ENCODE measurements at regions of chr11 and their contacts with region 1.

Region 1: DNA sequence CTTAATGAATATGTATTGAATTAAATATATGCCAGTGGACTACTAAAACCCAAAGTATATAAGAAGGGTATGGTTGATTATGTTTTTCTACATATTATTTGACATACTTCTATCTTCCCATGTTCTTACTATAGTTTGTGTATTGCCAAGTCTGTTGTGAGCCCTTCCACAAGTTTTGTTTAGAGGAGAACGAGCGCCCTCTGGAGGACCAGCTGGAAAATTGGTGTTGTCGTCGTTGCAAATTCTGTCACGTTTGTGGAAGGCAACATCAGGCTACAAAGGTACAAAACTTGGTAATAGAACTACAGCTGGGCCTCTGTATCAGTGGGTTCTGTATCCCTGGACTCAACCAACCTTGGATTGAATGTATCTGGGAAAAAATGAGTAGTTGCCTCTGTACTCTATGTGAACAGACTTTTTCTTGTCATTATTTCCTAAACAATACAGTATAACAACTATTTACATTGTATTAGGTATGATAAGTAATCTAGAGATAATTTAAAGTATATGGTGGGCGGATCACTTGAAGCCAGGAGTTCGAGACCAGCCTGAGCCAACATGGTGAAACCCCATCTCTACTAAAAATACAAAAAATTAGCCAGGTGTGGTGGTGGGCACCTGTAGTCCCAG is 38.7 kb upstream of the TTC36 start:
- DNase-seq: peak; percentile 74
- H3K4me3 ChIP-seq: no peak overlapping the region
- H3K27ac ChIP-seq: no peak overlapping the region
- H3K4me1 ChIP-seq: no peaks in the 10 kb centered on the region
- H3K27me3 ChIP-seq: no peaks in the 10 kb centered on the region
- CTCF ChIP-seq: peak; percentile 66

Region 2: GRCh38 chr11:118290923-118291322 is 197.7 kb before region 1 on chr11:
- intact Hi-C with region 1: loop called (anchors 10 kb)
- DNase-seq: peak; percentile 75
- H3K4me3 ChIP-seq: no peak overlapping the region
- H3K27ac ChIP-seq: no peak overlapping the region
- H3K4me1 ChIP-seq: no peaks in the 10 kb centered on the region
- H3K27me3 ChIP-seq: no peaks in the 10 kb centered on the region
- CTCF ChIP-seq: peak; percentile 39

Region 3: DNA sequence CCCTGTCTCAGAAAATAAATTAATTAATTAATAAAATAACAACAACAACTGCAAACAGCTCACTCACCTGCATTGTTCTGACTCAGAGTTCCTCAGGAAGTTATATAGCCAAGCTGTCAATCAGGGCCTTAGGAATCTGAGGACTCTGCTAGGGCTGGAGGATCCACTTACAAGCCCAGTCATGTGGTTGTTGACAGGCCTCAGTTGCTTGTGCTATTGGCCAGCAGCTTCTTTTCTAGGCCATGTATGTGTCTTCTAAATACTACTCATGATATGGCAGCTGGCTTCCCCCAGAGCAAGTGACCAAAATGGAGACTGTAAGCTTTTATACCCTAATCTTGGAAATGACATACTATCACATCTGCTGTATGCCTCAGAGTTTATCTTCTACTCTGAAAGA is 108.0 kb before region 1 on chr11:
- intact Hi-C with region 1: loop called (anchors 5 kb)
- DNase-seq: no peak
- H3K4me3 ChIP-seq: no peak overlapping the region
- H3K27ac ChIP-seq: no peak overlapping the region
- H3K4me1 ChIP-seq: no peaks in the 10 kb centered on the region
- H3K27me3 ChIP-seq: no peaks in the 10 kb centered on the region
- CTCF ChIP-seq: no peak

Region 4: DNA sequence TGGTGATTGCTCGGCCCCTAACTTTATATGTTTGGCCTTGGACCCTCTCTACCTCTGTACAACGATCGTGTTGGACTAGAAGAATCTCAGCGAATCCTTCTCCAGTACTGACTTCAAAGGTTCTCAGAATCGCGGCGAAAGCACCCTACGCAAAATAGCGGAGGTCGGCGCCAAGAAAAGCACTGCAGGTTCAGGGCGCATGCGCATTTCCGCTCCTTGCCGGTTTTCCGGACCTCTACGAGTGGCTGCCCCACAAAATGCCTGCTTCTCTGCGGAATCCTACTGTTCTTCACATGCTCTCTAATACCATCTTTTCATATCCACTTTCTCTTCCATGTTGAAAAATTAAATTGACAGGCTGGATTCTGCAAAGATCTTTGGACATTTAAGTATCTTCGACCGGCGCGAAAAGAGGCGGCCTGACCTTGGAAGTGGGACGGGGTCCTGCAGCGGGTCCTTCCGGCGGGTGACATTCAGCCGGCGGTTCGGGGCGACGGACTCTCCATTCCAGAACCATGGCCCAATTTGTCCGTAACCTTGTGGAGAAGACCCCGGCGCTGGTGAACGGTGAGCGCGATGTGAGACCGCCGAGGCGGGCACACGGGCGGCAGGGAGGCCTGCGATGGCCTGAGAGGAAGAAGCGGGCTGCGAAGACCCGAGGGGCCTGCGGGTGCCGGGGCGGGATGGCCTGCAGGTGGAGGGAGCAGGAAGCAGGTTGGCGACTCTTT is 87.3 kb before region 1 on chr11 and contains the start of gene ATP5MG:
- intact Hi-C with region 1: loop called (anchors 5 kb)
- DNase-seq: peak; percentile 94
- H3K4me3 ChIP-seq: peak within 1 kb of the TSS; percentile 98
- H3K27ac ChIP-seq: peak within 1 kb of the TSS; percentile 81
- H3K4me1 ChIP-seq: peaks cover 4% of the 10 kb centered on the region
- H3K27me3 ChIP-seq: no peaks in the 10 kb centered on the region
- CTCF ChIP-seq: no peak
- total RNA-seq, gene ATP5MG: 282 to 380 TPM